AG04449 (cell line): ENCODE measurements at regions of chr16 and their contacts with region 1.

Region 1: GRCh38 chr16:67480833-67481560 is at the start of gene ATP6V0D1:
- DNase-seq: peak; percentile 76
- H3K4me3 ChIP-seq: peak within 1 kb of the TSS; percentile 98
- CTCF ChIP-seq: peak; percentile 90

Region 2: GRCh38 chr16:67461600-67462592 is 19.1 kb before region 1 on chr16:
- CTCF ChIA-PET with region 1: interaction called, 66 read pairs
- POLR2A ChIA-PET with region 1: interaction called, 5 read pairs
- DNase-seq: no peak
- H3K4me3 ChIP-seq: no peak overlapping the region
- CTCF ChIP-seq: no peak

Region 3: DNA sequence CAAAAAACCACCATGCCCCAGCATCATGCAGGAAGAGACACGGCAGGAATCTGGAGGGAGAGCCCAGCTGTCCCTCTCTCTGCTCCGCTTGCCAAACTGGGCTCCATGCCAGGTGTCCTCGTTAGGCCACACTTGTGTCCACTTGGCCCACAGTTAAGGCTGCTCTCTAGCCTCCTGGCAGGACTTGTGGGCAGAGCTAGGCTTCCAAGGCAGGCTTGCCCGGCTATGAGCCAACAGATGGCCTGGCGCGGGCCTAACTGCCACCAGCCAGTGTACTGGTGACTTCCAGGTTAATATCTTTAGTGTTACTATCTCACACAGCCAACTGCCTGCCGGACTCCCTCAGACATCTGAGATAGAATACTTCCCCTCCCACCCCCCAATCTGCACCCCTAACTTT is 10.6 kb before region 1 on chr16:
- CTCF ChIA-PET with region 1: interaction called, 66 read pairs
- POLR2A ChIA-PET with region 1: interaction called, 5 read pairs
- DNase-seq: no peak
- H3K4me3 ChIP-seq: no peak overlapping the region
- CTCF ChIP-seq: no peak

Region 4: DNA sequence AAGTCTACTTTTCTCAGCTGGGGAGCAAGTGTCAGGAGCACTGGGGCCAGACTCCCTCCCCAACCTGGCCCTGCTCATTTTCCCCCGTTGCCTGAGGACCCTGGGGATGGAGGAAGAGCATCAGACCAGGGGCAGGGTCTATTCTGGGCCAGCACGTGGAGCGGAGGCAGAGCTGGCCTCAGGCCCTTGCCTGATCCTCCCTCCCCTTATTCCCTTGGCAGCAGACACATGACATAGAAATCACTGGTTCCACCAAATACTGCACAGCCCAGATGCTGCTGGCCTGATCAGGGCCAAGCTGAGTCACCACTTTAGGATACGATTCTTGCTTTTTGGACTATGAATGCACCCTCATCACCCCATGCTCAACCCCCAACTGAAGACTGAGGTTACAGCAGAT is 18.1 kb after region 1 on chr16:
- CTCF ChIA-PET with region 1: interaction called, 129 read pairs
- POLR2A ChIA-PET with region 1: no interaction called
- DNase-seq: no peak
- H3K4me3 ChIP-seq: no peak overlapping the region
- CTCF ChIP-seq: no peak

Region 5: GRCh38 chr16:67530013-67530939 is 49.3 kb after region 1 on chr16:
- CTCF ChIA-PET with region 1: interaction called, 661 read pairs
- POLR2A ChIA-PET with region 1: interaction called, 4 read pairs
- DNase-seq: no peak
- H3K4me3 ChIP-seq: peak overlapping the region; percentile 73
- CTCF ChIP-seq: no peak

Region 6: DNA sequence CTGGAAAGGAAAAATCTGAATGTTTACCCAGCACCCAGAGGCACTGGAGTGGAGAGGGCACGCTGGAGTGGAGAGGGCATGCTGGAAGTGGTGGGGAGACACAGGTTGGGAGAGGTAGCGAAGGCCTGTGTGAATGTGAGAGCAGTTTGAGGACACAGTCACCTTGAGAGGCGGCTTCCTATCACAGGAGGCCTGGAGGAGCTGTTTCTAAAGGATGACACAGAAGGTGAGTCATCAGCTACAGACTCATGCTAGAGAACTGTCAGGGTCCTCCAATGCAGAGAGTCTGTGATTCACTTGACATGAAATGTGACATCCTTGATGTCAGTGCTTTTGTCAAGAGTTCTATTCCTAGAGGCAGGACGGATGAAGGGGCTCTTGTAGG is 436.8 kb after region 1 on chr16:
- CTCF ChIA-PET with region 1: no interaction called
- POLR2A ChIA-PET with region 1: no interaction called
- DNase-seq: peak; percentile 44
- H3K4me3 ChIP-seq: no peak overlapping the region; the same call in 1 of the 2 replicates
- CTCF ChIP-seq: no peak